Caco-2 (cell line): ENCODE measurements at regions of chr4 and their contacts with region 1.

Region 1: GRCh38 chr4:56840559-56840958 is 19.1 kb upstream of the SPINK2 start:
- DNase-seq: no peak
- H3K4me3 ChIP-seq: no peak overlapping the region
- H3K4me3 Mint-ChIP-seq: no peak overlapping the region
- H3K27ac Mint-ChIP-seq: no peak overlapping the region
- H3K4me1 ChIP-seq: no peaks in the 10 kb centered on the region
- H3K4me1 Mint-ChIP-seq: no peaks in the 10 kb centered on the region
- H3K27me3 ChIP-seq: no peaks in the 10 kb centered on the region
- H3K27me3 Mint-ChIP-seq: no peaks in the 10 kb centered on the region
- CTCF ChIP-seq: no peak

Region 2: DNA sequence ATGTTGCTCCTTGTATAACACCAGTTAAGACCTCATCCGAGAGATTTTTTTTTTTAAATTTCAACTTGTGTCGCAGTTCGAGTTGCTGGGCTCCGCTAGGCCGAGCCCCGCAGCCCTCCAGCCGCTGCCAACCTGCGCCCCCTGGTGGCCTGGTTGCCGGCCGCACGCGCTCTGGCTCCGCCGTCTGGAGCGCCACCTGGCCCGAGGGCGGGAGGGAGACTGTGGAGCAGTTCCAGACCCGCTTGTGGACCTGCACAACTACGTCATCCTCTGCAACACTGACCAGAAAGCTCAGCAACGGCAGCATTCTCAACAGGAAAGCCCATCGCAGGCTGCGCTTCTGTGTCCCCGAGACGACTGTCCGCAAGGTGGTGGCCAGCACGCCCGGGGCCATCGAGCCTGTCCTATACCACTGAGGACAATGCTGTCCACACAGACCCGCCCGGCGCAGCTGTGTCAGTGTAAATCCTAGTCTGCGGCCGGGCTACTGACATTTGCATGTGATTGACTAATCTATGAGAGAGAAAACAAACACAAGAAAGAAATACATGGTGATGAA is 295.9 kb before region 1 on chr4:
- CTCF ChIA-PET with region 1: interaction called, 3 read pairs
- POLR2A ChIA-PET with region 1: no interaction called
- intact Hi-C with region 1: loop called (anchors 1 kb)
- DNase-seq: peak; percentile 83 to 95
- H3K4me3 ChIP-seq: peak overlapping the region; percentile 30
- H3K4me3 Mint-ChIP-seq: peak overlapping the region; percentile 73
- H3K27ac Mint-ChIP-seq: no peak overlapping the region
- H3K4me1 ChIP-seq: 0 out of 2 replicates have a peak, but pooled peaks cover 4% of the 10 kb centered on the region
- H3K4me1 Mint-ChIP-seq: peaks cover 5% of the 10 kb centered on the region
- H3K27me3 ChIP-seq: no peaks in the 10 kb centered on the region
- H3K27me3 Mint-ChIP-seq: peaks cover 8% of the 10 kb centered on the region
- CTCF ChIP-seq: peak; percentile 87 to 94

Region 3: GRCh38 chr4:56575820-56576429 is 264.6 kb before region 1 on chr4:
- CTCF ChIA-PET with region 1: interaction called, 11 read pairs
- POLR2A ChIA-PET with region 1: no interaction called
- intact Hi-C with region 1: loop called (anchors 10 kb)
- DNase-seq: no peak
- H3K4me3 ChIP-seq: no peak overlapping the region
- H3K4me3 Mint-ChIP-seq: no peak overlapping the region
- H3K27ac Mint-ChIP-seq: no peak overlapping the region
- H3K4me1 ChIP-seq: no peaks in the 10 kb centered on the region
- H3K4me1 Mint-ChIP-seq: no peaks in the 10 kb centered on the region
- H3K27me3 ChIP-seq: no peaks in the 10 kb centered on the region
- H3K27me3 Mint-ChIP-seq: no peaks in the 10 kb centered on the region
- CTCF ChIP-seq: peak; percentile 31 to 46

Region 4: DNA sequence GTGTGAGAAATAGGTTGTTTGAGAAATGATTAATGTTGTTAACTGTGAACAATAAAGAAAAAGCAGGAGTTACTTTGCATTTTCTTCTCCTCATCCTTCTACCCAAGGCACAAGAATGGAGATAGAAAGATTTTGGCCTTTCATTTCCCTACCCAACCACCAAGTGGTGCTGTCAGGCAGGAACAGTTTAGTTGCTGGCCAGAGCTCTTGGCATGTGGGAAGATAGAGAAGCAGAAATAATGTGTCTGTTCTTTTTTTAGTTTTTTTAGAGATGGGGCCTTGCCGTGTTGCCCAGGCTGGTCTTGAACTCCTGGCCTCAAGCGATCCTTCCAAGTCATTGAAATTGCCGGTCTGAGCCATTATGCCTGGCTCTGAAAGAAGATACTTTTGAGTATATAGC is 172.3 kb before region 1 on chr4:
- CTCF ChIA-PET with region 1: interaction called, 4 read pairs
- POLR2A ChIA-PET with region 1: no interaction called
- intact Hi-C with region 1: loop called (anchors 1 kb)
- DNase-seq: peak in 1 of 2 experiments; percentile 27
- H3K4me3 ChIP-seq: no peak overlapping the region
- H3K4me3 Mint-ChIP-seq: no peak overlapping the region
- H3K27ac Mint-ChIP-seq: no peak overlapping the region
- H3K4me1 ChIP-seq: no peaks in the 10 kb centered on the region
- H3K4me1 Mint-ChIP-seq: no peaks in the 10 kb centered on the region
- H3K27me3 ChIP-seq: no peaks in the 10 kb centered on the region
- H3K27me3 Mint-ChIP-seq: peaks cover 2% of the 10 kb centered on the region
- CTCF ChIP-seq: peak; percentile 44 to 54